Naive thymus-derived CD8-positive, alpha-beta T cell (primary cell): ENCODE measurements at regions of chr1 and their contacts with region 1.

Region 1: DNA sequence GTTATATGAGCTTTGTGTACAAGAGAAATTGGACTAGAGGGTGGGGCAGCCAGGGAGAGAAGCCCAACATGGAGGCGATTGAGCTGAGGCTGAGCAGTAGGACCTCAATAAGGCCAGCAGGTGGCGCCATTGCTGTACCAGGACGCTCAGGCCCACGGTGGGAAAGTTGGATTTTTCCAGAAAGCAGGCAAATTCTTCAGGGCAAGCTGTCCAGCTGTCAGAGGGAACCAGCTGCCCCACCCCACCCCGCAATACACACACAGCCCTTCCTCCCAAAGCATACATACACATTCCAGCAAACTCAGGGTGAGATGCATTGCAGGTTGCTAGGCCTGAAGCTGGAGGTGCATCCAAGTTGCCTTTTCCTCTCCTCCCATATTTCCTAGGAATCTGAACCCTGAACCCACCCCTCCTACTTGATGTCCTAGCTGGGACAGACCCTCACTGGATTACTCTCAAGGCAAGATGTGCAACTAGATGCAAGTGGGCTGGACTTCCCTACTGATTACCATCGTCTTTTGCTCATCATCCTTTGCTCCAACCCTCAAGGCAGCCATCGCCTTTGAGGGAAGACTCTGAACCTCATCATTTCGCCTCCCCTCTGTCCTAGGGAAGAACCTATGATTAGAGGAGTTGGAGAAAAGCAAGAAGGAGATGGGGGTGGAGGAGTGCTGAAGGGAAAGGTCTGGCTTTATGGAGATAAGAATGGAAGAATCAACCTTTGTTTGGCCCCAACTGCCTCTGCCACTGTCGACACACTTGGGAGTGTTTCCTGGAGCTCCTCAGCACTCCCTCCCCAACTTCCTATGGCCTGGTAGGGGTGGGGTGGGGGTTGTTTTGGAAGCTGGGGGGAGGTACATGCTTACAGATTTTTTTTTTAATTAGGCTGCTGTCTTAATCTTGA is 25.5 kb downstream of the CD34 start:
- DNase-seq: peak; percentile 47 to 82 (median 68)
- ATAC-seq: peak; percentile 74 to 76
- H3K4me3 Mint-ChIP-seq: peak overlapping the region in 7 of 10 donors; percentile 33 to 91 (median 52)
- H3K27ac Mint-ChIP-seq: peak overlapping the region; percentile 76 to 99 (median 96)
- H3K4me1 Mint-ChIP-seq: peaks cover 29 to 43% (median 41%) of the 10 kb centered on the region in 4 donors
- H3K27me3 Mint-ChIP-seq: peaks cover 0 to 11% (median 2%) of the 10 kb centered on the region in 5 donors

Region 2: GRCh38 chr1:207811920-207812720 is 73.3 kb before region 1 on chr1:
- POLR2A ChIA-PET with region 1: no interaction called
- DNase-seq: no peak
- ATAC-seq: no peak
- H3K4me3 Mint-ChIP-seq: peak overlapping the region in 3 of 10 donors; percentile 10 to 30 (median 18)
- H3K27ac Mint-ChIP-seq: peak overlapping the region; percentile 19 to 89 (median 70)
- H3K4me1 Mint-ChIP-seq: peaks cover 42 to 95% (median 91%) of the 10 kb centered on the region in 4 donors
- H3K27me3 Mint-ChIP-seq: no peaks in the 10 kb centered on the region

Region 3: GRCh38 chr1:207963427-207964194 is 78.2 kb after region 1 on chr1:
- POLR2A ChIA-PET with region 1: interaction called, 26 read pairs
- DNase-seq: peak; percentile 66 to 89 (median 84)
- ATAC-seq: peak; percentile 81 to 83
- H3K4me3 Mint-ChIP-seq: peak overlapping the region; percentile 71 to 90 (median 84)
- H3K27ac Mint-ChIP-seq: peak overlapping the region in 8 of 10 donors; percentile 37 to 82 (median 62)
- H3K4me1 Mint-ChIP-seq: peaks cover 10 to 19% (median 15%) of the 10 kb centered on the region in 4 donors
- H3K27me3 Mint-ChIP-seq: peaks cover 4 to 31% (median 23%) of the 10 kb centered on the region in 5 donors